Activated B cell treated with CpG ODN at 0.5 μM for 24 hours (primary cell): ENCODE measurements at regions of chr5 and their contacts with region 1.

Region 1: GRCh38 chr5:65035211-65036206 is 266.8 kb downstream of the CWC27 start:
- DNase-seq: peak; percentile 70
- ATAC-seq: peak; percentile 80
- H3K4me3 Mint-ChIP-seq: peak overlapping the region; percentile 83
- H3K27ac Mint-ChIP-seq: peak overlapping the region; percentile 77
- H3K4me1 Mint-ChIP-seq: peaks cover 32% of the 10 kb centered on the region
- H3K27me3 Mint-ChIP-seq: no peaks in the 10 kb centered on the region
- CTCF ChIP-seq: no peak

Region 2: GRCh38 chr5:64768358-64769312 is 266.9 kb before region 1 on chr5 and contains the starts of genes CWC27 and SREK1IP1:
- CTCF ChIA-PET with region 1: no interaction called
- POLR2A ChIA-PET with region 1: no interaction called
- intact Hi-C with region 1: loop called (anchors 10 kb)
- DNase-seq: peak; percentile 69
- ATAC-seq: peak; percentile 95
- H3K4me3 Mint-ChIP-seq: peak within 1 kb of the TSS; percentile 100
- H3K27ac Mint-ChIP-seq: peak within 1 kb of the TSS; percentile 99
- H3K4me1 Mint-ChIP-seq: peaks cover 62% of the 10 kb centered on the region
- H3K27me3 Mint-ChIP-seq: no peaks in the 10 kb centered on the region
- CTCF ChIP-seq: no peak
- total RNA-seq, gene CWC27: 28.9 and 29.2 TPM in 2 replicates
- total RNA-seq, gene SREK1IP1: 21.7 and 22.2 TPM in 2 replicates

Region 3: DNA sequence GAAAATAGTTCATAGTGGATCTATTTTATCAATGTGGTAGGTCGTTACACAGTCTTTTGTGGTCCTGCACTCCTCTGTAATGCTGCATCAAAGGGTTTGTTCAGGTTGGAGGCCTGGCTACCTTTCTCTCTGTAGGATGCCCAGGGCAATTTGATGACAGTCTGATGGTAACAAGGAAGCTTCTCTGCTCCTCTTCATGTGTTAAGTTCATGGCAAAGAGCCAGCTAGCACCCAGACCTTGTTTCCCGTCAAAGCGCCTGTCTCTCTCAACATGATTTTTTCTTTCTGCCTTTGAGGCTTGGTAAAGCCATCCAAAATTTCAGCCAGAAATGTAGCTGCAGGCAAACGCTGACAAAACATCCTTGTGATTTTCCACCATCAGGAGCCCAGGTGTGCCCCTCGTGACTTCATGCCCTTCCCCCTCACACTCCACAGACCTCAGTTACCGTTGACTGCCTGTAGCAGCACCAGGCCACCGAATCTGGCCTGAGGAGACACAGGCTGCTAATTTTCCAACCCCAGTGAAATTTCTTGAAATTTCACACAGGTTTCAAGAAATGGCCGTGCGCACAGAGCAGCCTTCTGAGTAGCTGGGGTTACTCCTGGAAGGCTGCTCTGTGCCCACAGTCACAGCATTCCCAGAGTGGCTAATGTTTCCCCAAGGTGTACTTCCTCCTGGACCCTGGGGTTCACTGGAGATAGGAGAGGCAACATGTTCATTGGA is 25.9 kb after region 1 on chr5:
- CTCF ChIA-PET with region 1: interaction called, 3 read pairs
- POLR2A ChIA-PET with region 1: interaction called, 3 read pairs
- intact Hi-C with region 1: loop called (anchors 1 kb)
- DNase-seq: peak; percentile 23
- ATAC-seq: peak; percentile 72
- H3K4me3 Mint-ChIP-seq: peak overlapping the region; percentile 36
- H3K27ac Mint-ChIP-seq: peak overlapping the region; percentile 80
- H3K4me1 Mint-ChIP-seq: peaks cover 60% of the 10 kb centered on the region
- H3K27me3 Mint-ChIP-seq: no peaks in the 10 kb centered on the region
- CTCF ChIP-seq: no peak